ENCODE measurements at regions of chr10 and their contacts with region 1.

Region 1: DNA sequence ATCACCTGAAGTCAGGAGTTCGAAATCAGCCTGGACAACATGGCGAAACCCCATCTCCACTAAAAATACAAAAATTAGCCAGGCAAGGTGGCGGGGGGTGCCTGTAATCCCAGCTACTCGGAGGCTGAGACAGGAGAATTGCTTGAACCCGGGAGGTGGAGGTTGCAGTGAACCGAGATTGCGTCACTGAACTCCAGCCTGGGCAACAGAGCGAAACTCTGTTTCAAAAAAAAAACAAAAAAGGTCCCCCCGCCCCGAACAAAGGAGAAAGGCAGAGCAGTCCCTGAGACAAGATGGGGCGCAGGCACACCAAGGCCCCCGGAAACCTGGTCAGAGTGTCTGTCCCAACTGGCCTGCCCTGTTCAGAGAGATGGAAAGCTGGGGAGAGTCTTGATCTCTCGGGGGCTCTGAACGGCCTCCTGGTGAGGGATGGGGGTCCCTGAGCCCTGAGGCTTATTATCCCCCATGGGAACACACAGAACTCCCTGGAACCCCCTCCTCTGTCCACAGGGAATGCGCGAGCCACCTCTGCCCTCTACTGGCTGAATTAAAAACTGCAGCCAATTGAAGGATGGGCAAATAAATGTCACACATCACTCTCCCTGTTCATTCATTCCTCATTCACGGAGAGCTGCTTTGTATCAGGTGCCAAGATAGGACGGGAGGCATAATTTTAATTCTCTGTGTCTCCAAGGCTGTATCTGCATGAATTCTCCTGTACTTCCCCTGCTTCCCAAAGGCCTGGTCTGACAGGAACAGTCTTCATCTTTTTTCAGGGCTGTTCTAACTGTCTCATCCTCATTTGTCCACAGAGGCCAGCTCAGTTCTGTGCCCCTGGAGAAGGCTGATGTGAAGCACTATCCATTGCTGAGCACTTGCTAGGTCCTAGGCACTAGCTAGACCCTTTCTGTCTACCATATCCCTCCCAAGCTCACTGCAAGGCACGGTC is 28.9 kb downstream of the MAT1A start:
- DNase-seq: no peak
- H3K4me3 ChIP-seq: no peak overlapping the region
- H3K27me3 ChIP-seq: peaks cover 2% of the 10 kb centered on the region
- CTCF ChIP-seq: peak; percentile 84

Region 2: GRCh38 chr10:79331709-79332108 is 928.9 kb before region 1 on chr10:
- CTCF ChIA-PET with region 1: no interaction called
- POLR2A ChIA-PET with region 1: no interaction called
- DNase-seq: peak; percentile 65
- H3K4me3 ChIP-seq: no peak overlapping the region
- H3K27me3 ChIP-seq: no peaks in the 10 kb centered on the region
- CTCF ChIP-seq: no peak

Region 3: DNA sequence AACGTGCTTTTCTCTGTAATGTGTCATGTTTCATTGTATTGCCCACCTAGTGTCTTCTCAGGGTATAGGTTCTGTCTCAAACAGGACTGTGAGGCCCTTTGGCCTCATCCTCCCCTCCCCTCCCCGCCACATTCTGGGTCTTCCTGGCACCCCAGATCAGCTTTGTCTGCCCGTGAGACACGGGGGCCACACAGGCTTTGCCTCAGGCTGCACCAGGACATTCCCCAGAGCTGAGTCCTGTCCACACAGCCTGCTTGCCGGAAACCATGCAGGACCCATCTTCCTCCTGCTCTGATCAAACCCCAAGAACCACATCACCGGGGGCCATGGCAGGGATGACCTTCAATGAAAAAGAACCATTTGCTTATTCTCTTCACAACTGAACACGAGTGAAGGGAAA is 10.3 kb after region 1 on chr10:
- CTCF ChIA-PET with region 1: interaction called, 12 read pairs
- POLR2A ChIA-PET with region 1: no interaction called
- DNase-seq: no peak
- H3K4me3 ChIP-seq: no peak overlapping the region
- H3K27me3 ChIP-seq: no peaks in the 10 kb centered on the region
- CTCF ChIP-seq: no peak

Measured in BJ (cell line).